H1 (cell line): ENCODE measurements at regions of chr17 and their contacts with region 1.

Region 1: GRCh38 chr17:28494445-28495188 is 11.5 kb upstream of the FOXN1 start:
- DNase-seq: peak; percentile 41 to 96
- H3K4me3 ChIP-seq: no peak overlapping the region
- H3K27ac ChIP-seq: no peak overlapping the region
- H3K4me1 ChIP-seq: peaks cover 0 to 19% (median 8%) of the 10 kb centered on the region in 4 experiments; a peak in 6 of 7 replicates
- H3K27me3 ChIP-seq: no peaks in the 10 kb centered on the region
- CTCF ChIP-seq: peak; percentile 93 to 97 (median 93)
- EP300 ChIP-seq: no peak
- POLR2A ChIP-seq: no peak
- RAD21 ChIP-seq: peak; percentile 98 to 99

Region 2: GRCh38 chr17:28402224-28402630 is 92.4 kb before region 1 on chr17:
- CTCF ChIA-PET with region 1: no interaction called
- POLR2A ChIA-PET with region 1: no interaction called
- DNase-seq: peak in 1 of 2 experiments; percentile 64
- H3K4me3 ChIP-seq: no peak overlapping the region
- H3K27ac ChIP-seq: no peak overlapping the region
- H3K4me1 ChIP-seq: peaks cover 23 to 49% (median 29%) of the 10 kb centered on the region in 4 experiments
- H3K27me3 ChIP-seq: peaks cover 0 to 39% (median 15%) of the 10 kb centered on the region in 4 experiments; a peak in 5 of 7 replicates
- CTCF ChIP-seq: no peak
- EP300 ChIP-seq: peak in 1 of 2 experiments; percentile 87; a peak in 1 of 3 replicates
- POLR2A ChIP-seq: no peak
- RAD21 ChIP-seq: no peak

Region 3: GRCh38 chr17:28484296-28484695 is 10.3 kb before region 1 on chr17:
- CTCF ChIA-PET with region 1: interaction called, 31 read pairs
- POLR2A ChIA-PET with region 1: interaction called, 4 read pairs
- DNase-seq: no peak
- H3K4me3 ChIP-seq: no peak overlapping the region
- H3K27ac ChIP-seq: no peak overlapping the region
- H3K4me1 ChIP-seq: peaks cover 3 to 12% (median 6%) of the 10 kb centered on the region in 4 experiments
- H3K27me3 ChIP-seq: peaks cover 0 to 3% (median under 1%) of the 10 kb centered on the region in 4 experiments; a peak in 1 of 7 replicates
- CTCF ChIP-seq: no peak
- EP300 ChIP-seq: no peak
- POLR2A ChIP-seq: no peak
- RAD21 ChIP-seq: no peak

Region 4: GRCh38 chr17:28509789-28510188 is 15.2 kb after region 1 on chr17:
- CTCF ChIA-PET with region 1: interaction called, 16 read pairs
- POLR2A ChIA-PET with region 1: interaction called, 3 read pairs
- DNase-seq: no peak
- H3K4me3 ChIP-seq: no peak overlapping the region
- H3K27ac ChIP-seq: no peak overlapping the region
- H3K4me1 ChIP-seq: peaks cover 0 to 17% (median 7%) of the 10 kb centered on the region in 4 experiments; a peak in 6 of 7 replicates
- H3K27me3 ChIP-seq: peaks cover 0 to 8% (median 4%) of the 10 kb centered on the region in 4 experiments; a peak in 4 of 7 replicates
- CTCF ChIP-seq: no peak
- EP300 ChIP-seq: no peak
- POLR2A ChIP-seq: no peak
- RAD21 ChIP-seq: no peak

Region 5: DNA sequence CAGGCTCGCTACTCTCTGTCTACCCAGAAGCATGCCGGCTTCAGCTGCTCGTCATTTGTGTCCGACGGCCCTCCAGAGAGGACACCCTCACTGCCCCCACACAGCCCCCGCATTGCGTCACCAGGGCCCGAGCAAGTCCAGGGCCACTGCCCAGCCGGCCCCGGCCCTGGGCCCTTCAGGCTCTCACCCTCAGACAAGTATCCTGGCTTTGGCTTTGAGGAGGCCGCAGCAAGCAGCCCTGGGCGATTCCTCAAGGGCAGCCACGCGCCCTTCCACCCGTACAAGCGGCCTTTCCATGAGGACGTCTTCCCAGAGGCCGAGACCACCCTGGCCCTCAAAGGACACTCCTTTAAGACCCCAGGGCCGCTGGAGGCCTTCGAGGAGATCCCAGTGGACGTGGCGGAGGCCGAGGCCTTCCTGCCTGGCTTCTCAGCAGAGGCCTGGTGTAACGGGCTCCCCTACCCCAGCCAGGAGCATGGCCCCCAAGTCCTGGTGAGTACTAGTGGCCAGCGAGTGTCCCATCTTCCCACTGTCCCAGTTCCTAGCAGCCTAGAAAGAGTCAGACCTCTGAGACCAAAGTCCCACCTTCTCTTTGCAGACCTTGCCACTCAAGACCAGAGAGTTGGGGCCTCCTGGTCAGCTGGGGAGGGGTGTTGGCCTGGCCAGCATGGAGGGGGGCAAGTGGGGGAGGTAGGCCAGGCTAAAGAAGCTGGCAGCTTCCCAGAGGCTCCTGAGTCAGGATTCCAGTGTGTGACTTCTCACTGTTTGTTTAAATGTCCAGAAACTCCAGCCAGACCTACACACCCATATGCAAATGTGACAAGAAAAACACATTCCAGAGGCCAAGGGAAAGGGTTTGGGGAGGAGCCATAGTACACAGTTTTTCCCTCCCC is 30.1 kb after region 1 on chr17:
- CTCF ChIA-PET with region 1: interaction called, 13 read pairs
- POLR2A ChIA-PET with region 1: no interaction called
- DNase-seq: no peak
- H3K4me3 ChIP-seq: no peak overlapping the region
- H3K27ac ChIP-seq: no peak overlapping the region
- H3K4me1 ChIP-seq: peaks cover 0 to 15% (median 4%) of the 10 kb centered on the region in 4 experiments; a peak in 3 of 7 replicates
- H3K27me3 ChIP-seq: no peaks in the 10 kb centered on the region
- CTCF ChIP-seq: no peak
- EP300 ChIP-seq: no peak
- POLR2A ChIP-seq: no peak
- RAD21 ChIP-seq: no peak

Region 6: DNA sequence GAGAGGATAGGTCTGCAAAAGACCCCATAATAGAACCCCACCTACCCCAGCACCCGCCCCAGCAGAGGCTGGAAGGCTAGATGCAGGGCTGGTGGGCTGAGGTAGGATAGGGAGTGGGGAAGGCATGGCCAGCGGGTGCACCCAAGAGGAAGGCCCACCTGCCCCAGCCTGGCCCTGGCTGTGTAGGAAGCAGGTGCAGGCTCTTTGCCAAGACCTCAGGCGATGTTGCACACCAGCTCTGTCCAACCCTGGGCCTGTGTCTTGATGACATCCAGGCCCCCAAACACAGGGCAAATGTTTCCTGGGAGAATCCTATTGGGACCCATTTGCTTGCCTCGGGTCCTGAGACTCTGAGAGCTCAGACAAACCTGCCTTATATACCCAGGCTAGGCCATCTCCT is 45.6 kb after region 1 on chr17:
- CTCF ChIA-PET with region 1: interaction called, 547 read pairs
- POLR2A ChIA-PET with region 1: interaction called, 4 read pairs
- DNase-seq: no peak
- H3K4me3 ChIP-seq: no peak overlapping the region
- H3K27ac ChIP-seq: no peak overlapping the region
- H3K4me1 ChIP-seq: peaks cover 0 to 7% (median 0%) of the 10 kb centered on the region in 4 experiments; a peak in 2 of 7 replicates
- H3K27me3 ChIP-seq: no peaks in the 10 kb centered on the region
- CTCF ChIP-seq: no peak
- EP300 ChIP-seq: no peak
- POLR2A ChIP-seq: no peak
- RAD21 ChIP-seq: no peak